Right cardiac atrium (tissue), 5 donors: ENCODE measurements at regions of chr3 and their contacts with region 1.

Region 1: GRCh38 chr3:148943506-148944205 is 47.7 kb upstream of the GYG1 start:
- DNase-seq: no peak
- ATAC-seq: peak; percentile 83 to 91
- H3K4me3 ChIP-seq: no peak overlapping the region
- H3K27ac ChIP-seq: no peak overlapping the region
- H3K4me1 ChIP-seq: no peaks in the 10 kb centered on the region
- H3K27me3 ChIP-seq: no peaks in the 10 kb centered on the region

Region 2: DNA sequence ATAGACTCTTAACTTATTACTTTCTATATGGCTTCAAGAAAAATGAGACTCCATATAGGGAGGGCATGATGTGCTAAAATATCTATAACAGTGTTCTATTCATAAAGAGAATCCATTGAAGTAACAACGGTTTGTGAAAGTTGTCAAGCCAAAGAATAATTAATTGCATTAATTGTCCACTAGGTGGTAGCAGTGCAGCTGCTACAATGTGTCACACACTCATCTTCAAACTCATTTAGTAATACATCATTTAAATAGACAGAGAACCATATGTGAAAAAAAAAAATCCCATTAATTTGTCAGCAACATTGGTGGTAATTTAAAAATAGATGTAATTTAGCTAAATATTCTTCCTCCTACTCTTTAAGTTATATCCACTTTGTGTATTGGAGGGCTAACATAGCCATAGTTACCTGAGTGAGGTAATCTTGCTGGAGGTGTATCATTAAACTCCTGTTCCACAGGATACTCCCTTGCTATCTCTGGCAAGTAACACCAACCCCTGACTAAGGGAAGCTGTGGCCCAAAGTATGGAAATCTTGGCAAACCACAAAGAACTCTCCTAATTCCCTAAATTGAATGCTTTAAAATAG is 82.3 kb before region 1 on chr3:
- intact Hi-C with region 1: loop called (anchors 5 kb)
- DNase-seq: no peak
- ATAC-seq: peak in 1 of 2 donors; percentile 49
- H3K4me3 ChIP-seq: no peak overlapping the region
- H3K27ac ChIP-seq: no peak overlapping the region
- H3K4me1 ChIP-seq: no peaks in the 10 kb centered on the region
- H3K27me3 ChIP-seq: no peaks in the 10 kb centered on the region

Region 3: DNA sequence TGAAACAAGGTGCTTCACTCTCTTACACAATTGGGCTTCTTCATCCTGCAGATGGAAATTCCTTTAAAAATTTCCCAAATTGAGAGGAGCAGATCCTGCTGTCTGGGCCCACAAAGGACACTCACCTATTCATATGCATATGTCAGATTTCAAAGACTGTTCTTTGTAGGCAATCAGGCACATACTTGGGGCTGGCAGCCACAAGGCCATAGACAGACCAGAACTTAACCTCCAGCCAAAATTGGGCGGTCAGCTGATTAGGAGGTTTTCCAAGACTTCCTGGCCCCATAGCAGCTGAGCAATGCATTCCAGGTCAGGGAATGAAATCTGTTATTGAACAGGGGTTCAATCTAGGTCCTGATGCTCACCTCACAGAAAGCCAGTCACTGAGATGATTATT is 170.8 kb after region 1 on chr3:
- intact Hi-C with region 1: no loop called
- DNase-seq: no peak
- ATAC-seq: peak; percentile 36 to 45
- H3K4me3 ChIP-seq: no peak overlapping the region
- H3K27ac ChIP-seq: no peak overlapping the region
- H3K4me1 ChIP-seq: no peaks in the 10 kb centered on the region
- H3K27me3 ChIP-seq: no peaks in the 10 kb centered on the region